PC-9 (cell line): ENCODE measurements at regions of chr1 and their contacts with region 1.

Region 1: DNA sequence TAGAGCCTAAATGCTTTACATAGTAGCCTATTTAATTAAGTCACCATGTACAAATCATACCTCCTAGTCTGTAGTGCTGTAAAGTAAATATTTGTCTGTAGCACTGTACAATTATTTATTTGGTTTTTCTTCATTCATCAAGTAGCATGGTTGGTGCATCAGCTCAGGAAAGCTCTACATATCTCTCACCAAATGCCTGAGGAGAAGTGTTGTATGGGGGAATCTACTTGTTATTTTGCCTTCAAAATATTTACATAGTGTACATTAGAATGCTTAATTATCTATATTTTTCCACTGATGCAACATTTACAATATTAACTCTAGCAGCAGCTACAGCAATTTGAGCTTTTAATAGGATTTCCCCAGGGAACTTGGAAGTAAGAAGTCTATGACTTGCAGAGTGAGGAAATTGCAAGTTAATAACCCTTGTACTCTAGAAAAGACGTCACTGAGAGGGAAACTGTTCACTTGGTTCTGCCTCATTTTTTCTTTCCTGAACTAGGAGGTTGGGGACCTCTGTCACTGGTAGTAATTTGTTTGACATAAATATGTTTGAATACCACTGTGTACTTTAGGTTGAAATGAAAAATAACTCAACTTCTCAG is 207.4 kb downstream of the PDE4B start:
- DNase-seq: no peak
- H3K4me3 ChIP-seq: no peak overlapping the region
- H3K27ac ChIP-seq: no peak overlapping the region
- H3K4me1 ChIP-seq: no peaks in the 10 kb centered on the region
- H3K27me3 ChIP-seq: no peaks in the 10 kb centered on the region
- CTCF ChIP-seq: no peak

Region 2: DNA sequence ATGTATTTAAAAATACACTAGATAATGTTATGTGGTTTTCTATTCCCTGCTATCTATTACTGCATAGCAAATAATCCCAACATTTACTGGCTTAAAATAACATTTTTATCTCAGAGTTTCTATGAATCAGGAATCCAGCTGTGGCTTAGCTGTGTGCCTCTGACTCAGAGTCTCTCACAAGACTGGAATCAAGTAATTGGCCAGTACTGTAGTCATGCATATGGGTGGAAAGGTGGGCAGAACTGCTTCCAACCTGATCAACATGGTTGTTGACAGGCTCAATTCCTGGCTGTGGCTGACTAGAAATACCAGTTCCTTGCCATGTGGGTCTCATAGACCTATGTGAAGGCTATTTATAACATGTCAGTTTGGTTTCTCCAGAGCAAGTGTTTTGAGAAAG is 75.7 kb before region 1 on chr1:
- CTCF ChIA-PET with region 1: no interaction called
- POLR2A ChIA-PET with region 1: no interaction called
- intact Hi-C with region 1: no loop called
- DNase-seq: no peak
- H3K4me3 ChIP-seq: no peak overlapping the region
- H3K27ac ChIP-seq: no peak overlapping the region
- H3K4me1 ChIP-seq: no peaks in the 10 kb centered on the region
- H3K27me3 ChIP-seq: no peaks in the 10 kb centered on the region
- CTCF ChIP-seq: no peak

Region 3: DNA sequence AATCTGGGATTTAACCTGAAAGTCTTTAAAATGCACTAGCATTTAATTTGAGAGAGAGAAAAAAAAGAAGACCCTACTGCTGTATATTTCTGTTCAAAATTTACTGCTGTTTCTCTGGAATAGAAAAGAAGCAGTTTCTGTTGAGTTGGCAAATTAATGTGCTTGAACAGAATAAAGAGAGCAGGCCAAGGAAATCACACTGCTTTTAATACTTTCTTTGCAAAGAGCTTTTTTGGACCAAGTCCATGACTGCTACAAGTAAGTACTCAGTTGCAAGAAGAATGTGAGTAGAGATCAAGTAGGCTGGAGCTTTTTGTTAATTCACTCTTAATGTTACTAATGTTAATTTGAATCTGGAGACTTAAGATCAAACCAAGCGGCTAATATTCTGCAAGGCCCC is 197.7 kb after region 1 on chr1:
- CTCF ChIA-PET with region 1: no interaction called
- POLR2A ChIA-PET with region 1: interaction called, 12 read pairs
- intact Hi-C with region 1: no loop called
- DNase-seq: no peak
- H3K4me3 ChIP-seq: no peak overlapping the region
- H3K27ac ChIP-seq: no peak overlapping the region
- H3K4me1 ChIP-seq: no peaks in the 10 kb centered on the region
- H3K27me3 ChIP-seq: no peaks in the 10 kb centered on the region
- CTCF ChIP-seq: no peak